ENCODE measurements at regions of chr9 and their contacts with region 1.

Region 1: GRCh38 chr9:121992571-121993212 is 100.4 kb downstream of the TTLL11 start:
- DNase-seq: peak in 4 of 5 donors; percentile 31 to 45 (median 39)
- H3K4me3 ChIP-seq: no peak overlapping the region
- H3K4me3 Mint-ChIP-seq: no peak overlapping the region
- H3K27ac ChIP-seq: no peak overlapping the region
- H3K27ac Mint-ChIP-seq: no peak overlapping the region
- H3K4me1 ChIP-seq: no peaks in the 10 kb centered on the region
- H3K4me1 Mint-ChIP-seq: no peaks in the 10 kb centered on the region
- H3K27me3 ChIP-seq: no peaks in the 10 kb centered on the region
- H3K27me3 Mint-ChIP-seq: no peaks in the 10 kb centered on the region

Region 2: DNA sequence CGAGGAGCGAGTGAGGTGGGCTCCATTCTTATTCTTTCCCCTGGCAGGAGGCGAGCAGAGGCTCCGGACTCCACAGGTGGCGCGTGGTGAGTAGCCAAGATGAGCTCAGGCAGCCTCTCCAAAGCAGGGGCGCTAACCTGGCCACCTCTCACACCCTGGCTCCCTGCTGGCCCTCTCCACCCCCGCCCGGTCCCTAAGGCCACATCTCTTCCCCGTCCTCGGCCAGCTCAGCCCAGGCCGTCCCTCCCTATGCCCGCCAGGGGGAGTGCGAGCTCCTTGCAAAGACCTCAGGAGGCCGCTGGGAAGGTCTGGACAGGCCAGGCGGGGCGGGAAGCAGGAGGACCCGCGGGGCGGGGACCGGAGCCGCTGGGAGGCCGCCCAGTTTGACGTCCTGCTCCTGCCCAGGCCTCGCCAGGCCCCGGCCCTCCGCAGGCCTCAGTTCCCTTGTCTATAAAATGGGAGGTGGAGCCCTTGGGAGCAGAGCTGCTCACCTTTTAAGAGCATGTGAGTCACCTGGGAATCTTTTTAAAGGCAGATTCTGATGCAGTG is 446.7 kb before region 1 on chr9:
- CTCF ChIA-PET with region 1: interaction called, 8 read pairs
- POLR2A ChIA-PET with region 1: no interaction called
- intact Hi-C with region 1: loop called (anchors 1 kb)
- DNase-seq: peak; percentile 25 to 54 (median 41)
- H3K4me3 ChIP-seq: no peak overlapping the region
- H3K4me3 Mint-ChIP-seq: no peak overlapping the region
- H3K27ac ChIP-seq: no peak overlapping the region
- H3K27ac Mint-ChIP-seq: no peak overlapping the region
- H3K4me1 ChIP-seq: peaks cover 10% of the 10 kb centered on the region
- H3K4me1 Mint-ChIP-seq: peaks cover 0 to 5% (median 3%) of the 10 kb centered on the region in 4 donors
- H3K27me3 ChIP-seq: no peaks in the 10 kb centered on the region
- H3K27me3 Mint-ChIP-seq: peaks cover 6 to 9% of the 10 kb centered on the region in 2 donors

Region 3: DNA sequence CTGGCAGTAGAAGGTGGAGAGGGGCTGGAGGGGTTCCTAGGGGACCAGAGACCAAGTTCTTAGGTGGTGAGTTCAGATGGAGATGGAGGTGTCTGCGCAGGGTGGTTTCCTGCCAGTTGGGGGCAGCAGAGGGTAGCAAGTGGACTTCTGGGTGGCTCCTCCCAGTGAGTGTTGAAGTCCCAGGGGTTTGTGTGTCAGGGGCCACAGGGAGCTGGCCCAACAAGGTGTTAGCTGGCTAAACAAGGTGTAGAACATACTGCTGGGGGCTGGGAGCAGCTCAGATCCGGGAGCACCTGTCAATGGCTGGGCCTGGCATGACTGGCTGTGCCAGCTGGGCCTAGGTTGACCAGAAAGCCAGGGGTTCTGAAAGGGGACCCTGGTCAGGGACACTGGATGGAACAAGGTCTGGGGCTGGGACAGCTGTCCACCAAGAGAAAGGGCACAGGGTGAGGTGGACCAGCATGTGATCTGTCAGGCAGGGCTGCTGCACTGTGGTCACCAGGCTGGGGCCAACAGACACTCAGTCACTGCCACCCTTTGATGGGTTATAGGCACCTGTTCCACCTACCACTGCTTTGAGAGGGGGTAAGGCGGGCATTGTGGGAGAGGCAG is 305.7 kb before region 1 on chr9:
- CTCF ChIA-PET with region 1: interaction called, 4 read pairs
- POLR2A ChIA-PET with region 1: no interaction called
- intact Hi-C with region 1: loop called (anchors 2 kb)
- DNase-seq: peak in 3 of 5 donors; percentile 8 to 15 (median 11)
- H3K4me3 ChIP-seq: no peak overlapping the region
- H3K4me3 Mint-ChIP-seq: no peak overlapping the region
- H3K27ac ChIP-seq: no peak overlapping the region
- H3K27ac Mint-ChIP-seq: peak overlapping the region in 1 of 7 donors; percentile 32
- H3K4me1 ChIP-seq: no peaks in the 10 kb centered on the region
- H3K4me1 Mint-ChIP-seq: no peaks in the 10 kb centered on the region
- H3K27me3 ChIP-seq: no peaks in the 10 kb centered on the region
- H3K27me3 Mint-ChIP-seq: peaks cover 2 to 10% of the 10 kb centered on the region in 2 donors

Region 4: DNA sequence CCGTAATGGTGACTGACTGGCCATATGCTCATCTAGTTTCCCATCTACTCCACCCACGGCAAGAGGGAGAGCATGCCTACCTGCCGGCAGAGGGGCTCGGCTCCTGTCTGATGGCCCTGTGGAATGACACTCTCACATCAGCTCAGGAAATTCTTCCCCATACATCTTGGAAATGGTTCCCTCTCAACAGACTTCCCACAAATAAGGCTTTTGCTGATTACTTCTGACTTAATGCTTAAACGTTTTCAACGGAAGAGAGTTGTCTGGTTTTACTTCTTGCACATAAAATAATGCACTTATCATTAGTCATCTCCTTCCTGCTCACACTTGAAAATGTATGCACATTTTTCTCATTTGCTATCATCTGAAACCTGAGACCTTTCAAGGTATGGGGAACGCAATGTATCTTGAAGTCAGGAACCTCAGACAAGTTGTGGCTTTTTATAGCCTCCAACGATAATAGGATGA is 29.1 kb before region 1 on chr9:
- CTCF ChIA-PET with region 1: no interaction called
- POLR2A ChIA-PET with region 1: no interaction called
- intact Hi-C with region 1: no loop called
- DNase-seq: no peak
- H3K4me3 ChIP-seq: no peak overlapping the region
- H3K4me3 Mint-ChIP-seq: no peak overlapping the region
- H3K27ac ChIP-seq: no peak overlapping the region
- H3K27ac Mint-ChIP-seq: no peak overlapping the region
- H3K4me1 ChIP-seq: no peaks in the 10 kb centered on the region
- H3K4me1 Mint-ChIP-seq: no peaks in the 10 kb centered on the region
- H3K27me3 ChIP-seq: no peaks in the 10 kb centered on the region
- H3K27me3 Mint-ChIP-seq: no peaks in the 10 kb centered on the region

Region 5: DNA sequence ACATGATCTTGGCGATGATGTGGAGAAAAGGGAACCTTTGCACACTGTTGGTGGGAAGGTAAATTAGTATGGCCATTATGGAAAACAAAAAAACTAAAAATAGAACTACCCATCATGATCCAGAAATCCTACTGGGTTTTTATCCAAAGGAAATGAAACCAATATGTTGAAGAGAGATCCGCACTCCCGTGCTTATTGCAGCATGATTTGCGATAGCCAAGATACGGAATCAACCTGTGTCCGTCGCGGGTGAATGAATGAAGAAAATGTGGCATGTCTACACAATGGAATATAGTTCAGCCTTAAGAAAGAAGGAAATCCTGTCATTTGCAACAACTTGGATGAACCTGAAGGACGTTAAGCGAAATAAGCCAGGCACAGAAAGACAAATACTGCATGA is 15.9 kb after region 1 on chr9:
- CTCF ChIA-PET with region 1: no interaction called
- POLR2A ChIA-PET with region 1: no interaction called
- intact Hi-C with region 1: no loop called
- DNase-seq: no peak
- H3K4me3 ChIP-seq: no peak overlapping the region
- H3K4me3 Mint-ChIP-seq: no peak overlapping the region
- H3K27ac ChIP-seq: no peak overlapping the region
- H3K27ac Mint-ChIP-seq: no peak overlapping the region
- H3K4me1 ChIP-seq: no peaks in the 10 kb centered on the region
- H3K4me1 Mint-ChIP-seq: no peaks in the 10 kb centered on the region
- H3K27me3 ChIP-seq: no peaks in the 10 kb centered on the region
- H3K27me3 Mint-ChIP-seq: no peaks in the 10 kb centered on the region